Naive thymus-derived CD4-positive, alpha-beta T cell (primary cell): ENCODE measurements at regions of chr2 and their contacts with region 1.

Region 1: GRCh38 chr2:74529357-74530238 is at the starts of genes AUP1 and HTRA2:
- DNase-seq: peak; percentile 75 to 92 (median 83)
- ATAC-seq: peak; percentile 90
- H3K4me3 ChIP-seq: peak within 1 kb of the TSS; percentile 94
- H3K4me3 Mint-ChIP-seq: peak within 1 kb of the TSS; percentile 91 to 98 (median 94)
- H3K27ac ChIP-seq: peak within 1 kb of the TSS; percentile 85
- H3K27ac Mint-ChIP-seq: peak within 1 kb of the TSS; percentile 88 to 97 (median 93)
- H3K4me1 ChIP-seq: peaks cover 11 to 25% of the 10 kb centered on the region in 2 donors
- H3K4me1 Mint-ChIP-seq: peaks cover 25 to 50% (median 43%) of the 10 kb centered on the region in 7 donors
- H3K27me3 ChIP-seq: no peaks in the 10 kb centered on the region
- H3K27me3 Mint-ChIP-seq: no peaks in the 10 kb centered on the region
- total RNA-seq, gene AUP1: 121 to 160 (median 144) TPM
- total RNA-seq, gene HTRA2: 16.9 to 46.2 (median 37.7) TPM

Region 2: GRCh38 chr2:73736855-73737779 is 792.5 kb before region 1 on chr2 and contains the start of gene TPRKB:
- CTCF ChIA-PET with region 1: no interaction called
- POLR2A ChIA-PET with region 1: interaction called, 3 read pairs
- intact Hi-C with region 1: loop called in 1 of 2 experiments (anchors 1 kb)
- DNase-seq: peak; percentile 73 to 95 (median 94)
- ATAC-seq: peak; percentile 99
- H3K4me3 ChIP-seq: peak within 1 kb of the TSS; percentile 78
- H3K4me3 Mint-ChIP-seq: peak within 1 kb of the TSS; percentile 92 to 98 (median 98)
- H3K27ac ChIP-seq: peak within 1 kb of the TSS; percentile 67
- H3K27ac Mint-ChIP-seq: peak within 1 kb of the TSS; percentile 85 to 97 (median 91)
- H3K4me1 ChIP-seq: peaks cover 8 to 14% of the 10 kb centered on the region in 2 donors
- H3K4me1 Mint-ChIP-seq: peaks cover 10 to 31% (median 21%) of the 10 kb centered on the region in 7 donors
- H3K27me3 ChIP-seq: no peaks in the 10 kb centered on the region
- H3K27me3 Mint-ChIP-seq: peaks cover 0 to 2% (median 0%) of the 10 kb centered on the region in 5 donors
- total RNA-seq, gene TPRKB: 16.5 to 34.6 (median 27.5) TPM

Region 3: DNA sequence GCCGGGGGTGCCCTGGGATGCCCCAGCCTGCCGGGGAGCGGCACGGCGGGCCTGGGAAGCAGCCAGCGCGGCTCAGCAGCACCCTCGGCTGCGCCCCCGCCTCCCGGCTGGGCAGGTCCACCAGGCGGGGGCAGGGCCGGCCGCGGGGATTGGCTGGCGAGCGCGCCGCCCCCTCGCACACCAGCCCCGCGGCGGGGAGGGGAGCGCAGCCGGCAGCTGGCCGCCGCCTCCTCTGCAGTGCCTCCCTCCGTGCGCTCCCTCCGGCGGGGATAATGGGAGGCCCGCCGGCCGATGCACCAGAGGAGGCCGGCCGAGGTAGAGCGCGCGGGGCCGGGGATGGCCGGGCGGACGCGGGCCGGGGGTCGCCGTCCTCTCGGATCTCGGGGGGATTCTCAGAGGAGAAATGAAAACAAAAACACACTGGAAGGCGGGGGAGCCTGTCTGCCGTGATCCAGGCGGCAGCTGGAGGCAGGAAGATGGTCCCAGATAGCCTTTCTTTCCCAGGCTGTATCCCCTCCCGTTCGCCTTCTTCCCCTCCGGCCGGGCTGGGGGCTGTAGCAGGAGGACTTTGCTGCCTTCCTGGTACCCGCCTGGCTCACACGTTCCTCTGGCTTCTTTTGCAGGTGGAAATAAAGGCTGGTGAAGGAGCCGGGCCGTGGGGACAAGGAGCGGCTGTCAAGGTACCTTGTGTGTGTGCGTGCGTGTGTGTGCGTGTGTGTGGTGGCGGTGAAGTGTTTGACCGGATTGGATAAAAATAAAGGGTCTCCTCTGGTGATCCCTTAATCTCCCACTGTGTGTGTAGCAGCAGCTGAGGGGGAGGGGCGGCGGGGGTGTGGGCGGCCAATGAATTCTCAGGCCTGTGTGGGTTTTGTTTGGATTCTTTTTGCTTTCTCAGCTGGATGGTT is 526.9 kb before region 1 on chr2:
- CTCF ChIA-PET with region 1: no interaction called
- POLR2A ChIA-PET with region 1: no interaction called
- intact Hi-C with region 1: no loop called
- DNase-seq: peak; percentile 71 to 89 (median 79)
- ATAC-seq: peak; percentile 95
- H3K4me3 ChIP-seq: peak overlapping the region; percentile 49
- H3K4me3 Mint-ChIP-seq: peak overlapping the region; percentile 82 to 95 (median 86)
- H3K27ac ChIP-seq: peak overlapping the region; percentile 67
- H3K27ac Mint-ChIP-seq: peak overlapping the region in 8 of 9 donors; percentile 59 to 92 (median 78)
- H3K4me1 ChIP-seq: peaks cover 9 to 35% of the 10 kb centered on the region in 2 donors
- H3K4me1 Mint-ChIP-seq: peaks cover 56 to 89% (median 75%) of the 10 kb centered on the region in 7 donors
- H3K27me3 ChIP-seq: no peaks in the 10 kb centered on the region
- H3K27me3 Mint-ChIP-seq: no peaks in the 10 kb centered on the region

Region 4: DNA sequence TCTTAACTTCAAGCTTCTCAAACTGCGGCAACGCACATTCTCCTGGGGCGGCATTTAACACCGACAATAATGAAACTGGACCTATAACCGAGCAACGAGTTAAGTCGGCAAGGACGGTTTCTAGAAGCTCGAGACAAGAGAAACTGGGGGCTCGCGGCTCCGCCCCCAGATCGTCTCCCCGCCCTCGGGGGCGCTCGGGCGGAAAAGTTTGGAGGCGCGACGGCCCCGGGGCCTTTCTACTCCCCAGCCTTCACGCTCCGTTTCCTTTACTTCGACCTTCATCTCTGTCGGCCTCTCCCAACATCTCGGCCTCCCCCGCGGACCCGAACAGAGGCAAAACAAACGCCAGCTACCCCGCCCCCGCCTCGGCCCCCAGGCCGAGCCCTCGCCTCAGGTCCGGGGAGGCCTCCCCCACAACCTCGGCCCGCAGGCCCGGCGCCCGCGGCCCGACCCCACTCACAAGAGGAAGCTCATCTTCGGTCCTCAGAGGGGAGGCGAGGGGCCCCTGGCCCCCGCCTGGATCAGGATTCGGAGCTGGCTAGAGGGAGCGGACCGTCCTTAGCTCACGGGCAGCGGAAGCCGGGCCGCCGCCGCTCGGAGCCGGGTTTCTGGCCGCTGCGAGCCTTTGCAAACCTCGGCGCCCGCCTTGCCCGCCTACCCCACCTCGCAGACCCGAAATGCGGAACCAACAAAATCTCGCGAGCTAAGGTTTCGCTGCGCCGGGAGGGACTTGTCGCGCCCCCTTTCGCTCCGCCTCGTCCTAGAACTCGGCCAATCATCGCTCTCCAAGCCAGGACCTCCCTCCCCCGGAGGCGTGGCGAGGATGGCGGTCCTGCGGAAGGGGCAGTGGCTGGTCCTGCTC is 351.2 kb before region 1 on chr2 and contains the start of gene MOB1A:
- CTCF ChIA-PET with region 1: no interaction called
- POLR2A ChIA-PET with region 1: no interaction called
- intact Hi-C with region 1: loop called (anchors 1 kb)
- DNase-seq: peak; percentile 94 to 98 (median 97)
- ATAC-seq: peak; percentile 97
- H3K4me3 ChIP-seq: peak within 1 kb of the TSS; percentile 89
- H3K4me3 Mint-ChIP-seq: peak within 1 kb of the TSS; percentile 86 to 95 (median 91)
- H3K27ac ChIP-seq: peak within 1 kb of the TSS; percentile 97
- H3K27ac Mint-ChIP-seq: peak within 1 kb of the TSS; percentile 82 to 95 (median 90)
- H3K4me1 ChIP-seq: peaks cover 25 to 37% of the 10 kb centered on the region in 2 donors
- H3K4me1 Mint-ChIP-seq: peaks cover 32 to 46% (median 35%) of the 10 kb centered on the region in 7 donors
- H3K27me3 ChIP-seq: no peaks in the 10 kb centered on the region
- H3K27me3 Mint-ChIP-seq: no peaks in the 10 kb centered on the region
- total RNA-seq, gene MOB1A: 113 to 185 (median 140) TPM

Region 5: DNA sequence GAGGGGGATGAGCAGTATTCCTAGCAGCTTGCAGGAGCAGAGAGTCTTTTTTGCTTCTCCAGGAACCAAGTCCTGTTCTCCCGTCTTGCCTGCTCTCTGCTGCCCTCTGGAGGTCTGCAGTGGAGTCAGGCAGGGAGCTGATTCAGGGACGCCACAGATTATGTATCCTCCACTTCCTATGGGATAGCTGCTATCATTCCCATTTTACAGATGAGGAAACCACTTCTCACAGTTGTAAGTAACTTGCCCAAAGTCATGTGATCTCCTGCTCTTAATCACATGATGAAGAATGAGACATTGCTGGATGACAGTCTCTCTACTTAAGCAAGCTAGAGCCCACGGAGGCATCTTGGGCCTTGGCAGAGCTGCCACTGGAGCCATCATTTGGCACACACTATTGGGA is 194.7 kb before region 1 on chr2:
- CTCF ChIA-PET with region 1: interaction called, 7 read pairs
- POLR2A ChIA-PET with region 1: no interaction called
- intact Hi-C with region 1: loop called (anchors 1 to 10 kb)
- DNase-seq: peak; percentile 36 to 81 (median 67)
- ATAC-seq: peak; percentile 90
- H3K4me3 ChIP-seq: no peak overlapping the region
- H3K4me3 Mint-ChIP-seq: no peak overlapping the region
- H3K27ac ChIP-seq: no peak overlapping the region
- H3K27ac Mint-ChIP-seq: peak overlapping the region in 2 of 9 donors; percentile 62 to 77
- H3K4me1 ChIP-seq: peaks cover 0 to 5% of the 10 kb centered on the region in 2 donors
- H3K4me1 Mint-ChIP-seq: peaks cover 0 to 14% (median 4%) of the 10 kb centered on the region in 7 donors
- H3K27me3 ChIP-seq: no peaks in the 10 kb centered on the region
- H3K27me3 Mint-ChIP-seq: peaks cover 0 to 2% (median 0%) of the 10 kb centered on the region in 5 donors

Region 6: DNA sequence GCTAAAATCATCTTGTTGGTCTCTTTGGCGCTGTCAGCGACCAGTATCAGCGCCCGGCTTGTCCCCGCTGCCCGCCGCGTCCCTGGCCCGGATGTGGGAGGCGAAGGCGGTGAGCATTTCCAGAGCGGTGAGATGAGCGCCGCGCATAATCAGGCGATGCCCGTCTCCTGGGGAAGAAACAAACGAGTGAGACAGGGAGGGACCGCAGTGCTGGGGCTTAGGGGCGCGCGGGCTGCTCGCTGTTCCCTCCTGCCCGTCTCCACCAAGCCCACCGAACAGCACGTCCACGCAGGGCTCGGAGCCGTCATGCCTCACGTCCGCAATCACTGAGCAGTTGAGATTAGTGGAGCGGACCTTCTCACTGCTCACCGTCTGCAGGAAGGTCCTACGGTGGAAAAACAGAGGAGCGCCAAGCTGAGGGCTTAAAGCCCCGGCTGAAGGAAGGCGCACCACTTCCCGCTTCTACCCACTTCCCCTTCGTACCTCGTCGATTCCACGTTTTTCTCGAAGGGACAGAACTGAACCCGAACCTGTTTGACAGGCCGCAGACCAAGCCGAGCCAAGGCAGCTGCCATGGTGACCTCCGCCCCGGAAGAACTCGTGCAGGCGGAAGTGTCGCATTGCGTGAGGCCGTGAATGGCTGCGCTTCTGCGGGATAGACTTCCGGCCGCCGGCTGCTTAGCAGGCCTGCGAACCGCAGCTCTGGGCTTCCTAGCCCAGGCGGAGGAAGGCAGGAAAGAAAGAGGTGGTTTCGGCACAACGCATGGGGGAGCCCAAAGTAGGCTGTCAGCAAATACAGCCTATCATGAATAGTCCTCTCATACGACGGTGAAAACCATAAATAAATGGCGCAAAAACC is 57.3 kb before region 1 on chr2 and contains the start of gene MRPL53:
- CTCF ChIA-PET with region 1: interaction called, 5 read pairs
- POLR2A ChIA-PET with region 1: no interaction called
- intact Hi-C with region 1: loop called (anchors 1 kb)
- DNase-seq: peak; percentile 91 to 98 (median 95)
- ATAC-seq: peak; percentile 96
- H3K4me3 ChIP-seq: peak within 1 kb of the TSS; percentile 89
- H3K4me3 Mint-ChIP-seq: peak within 1 kb of the TSS; percentile 88 to 99 (median 98)
- H3K27ac ChIP-seq: peak within 1 kb of the TSS; percentile 91
- H3K27ac Mint-ChIP-seq: peak within 1 kb of the TSS; percentile 94 to 99 (median 98)
- H3K4me1 ChIP-seq: peaks cover 14 to 19% of the 10 kb centered on the region in 2 donors
- H3K4me1 Mint-ChIP-seq: peaks cover 9 to 32% (median 29%) of the 10 kb centered on the region in 7 donors
- H3K27me3 ChIP-seq: no peaks in the 10 kb centered on the region
- H3K27me3 Mint-ChIP-seq: no peaks in the 10 kb centered on the region
- total RNA-seq, gene MRPL53: 45.7 to 108 (median 94.5) TPM

Region 7: DNA sequence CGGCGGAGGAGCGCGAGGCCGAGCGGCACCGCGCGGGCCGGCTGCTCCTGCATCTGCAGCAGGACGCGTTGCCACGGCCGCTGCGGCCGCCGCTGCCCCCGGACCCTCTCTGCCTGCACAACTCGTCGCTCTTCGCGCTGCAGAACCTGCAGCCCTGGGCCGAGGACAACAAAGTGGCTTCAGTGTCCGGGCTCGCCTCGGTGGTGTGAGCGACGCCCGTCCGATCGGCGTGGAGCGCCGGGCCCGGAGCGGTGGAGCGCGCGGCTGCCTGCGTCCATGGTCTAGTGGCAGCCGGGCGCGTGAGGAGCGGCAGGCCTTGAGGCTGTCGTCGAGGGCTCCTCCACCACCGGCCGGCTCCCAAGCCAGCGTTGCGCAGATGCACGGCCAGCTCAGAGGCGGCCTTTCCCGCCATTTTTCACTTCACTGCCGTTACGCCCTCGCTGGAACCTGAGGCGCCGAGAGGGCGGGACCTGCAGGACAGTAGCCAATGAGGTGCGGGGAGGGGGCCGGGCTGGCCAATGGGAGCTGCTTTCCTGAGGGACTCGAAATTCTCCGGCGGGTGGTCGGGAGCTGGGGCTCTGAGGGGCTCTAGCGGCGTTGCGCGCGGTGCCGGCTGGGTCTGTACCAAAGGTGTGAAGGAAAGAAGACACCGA is 13.5 kb before region 1 on chr2:
- CTCF ChIA-PET with region 1: interaction called, 3 read pairs
- POLR2A ChIA-PET with region 1: interaction called, 22 read pairs
- intact Hi-C with region 1: loop called (anchors 1 kb)
- DNase-seq: peak; percentile 55 to 80 (median 71)
- ATAC-seq: peak; percentile 85
- H3K4me3 ChIP-seq: peak overlapping the region; percentile 28
- H3K4me3 Mint-ChIP-seq: peak overlapping the region; percentile 66 to 87 (median 80)
- H3K27ac ChIP-seq: no peak overlapping the region
- H3K27ac Mint-ChIP-seq: peak overlapping the region in 1 of 9 donors; percentile 72
- H3K4me1 ChIP-seq: peaks cover 10 to 32% of the 10 kb centered on the region in 2 donors
- H3K4me1 Mint-ChIP-seq: peaks cover 9 to 25% (median 20%) of the 10 kb centered on the region in 7 donors
- H3K27me3 ChIP-seq: peaks cover 12 to 42% of the 10 kb centered on the region in 2 donors
- H3K27me3 Mint-ChIP-seq: peaks cover 69 to 83% (median 79%) of the 10 kb centered on the region in 5 donors